ENCODE measurements at regions of chrX and their contacts with region 1.

Region 1: GRCh38 chrX:95764972-95765451 is 919.6 kb upstream of the DIAPH2 start:
- DNase-seq: no peak
- H3K4me3 ChIP-seq: no peak overlapping the region
- H3K27ac ChIP-seq: no peak overlapping the region
- H3K4me1 ChIP-seq: peaks cover 0 to 5% (median 3%) of the 10 kb centered on the region in 4 donors
- H3K27me3 ChIP-seq: no peaks in the 10 kb centered on the region
- CTCF ChIP-seq: peak; percentile 25 to 49 (median 48)
- EP300 ChIP-seq: no peak
- POLR2A ChIP-seq: no peak

Region 2: DNA sequence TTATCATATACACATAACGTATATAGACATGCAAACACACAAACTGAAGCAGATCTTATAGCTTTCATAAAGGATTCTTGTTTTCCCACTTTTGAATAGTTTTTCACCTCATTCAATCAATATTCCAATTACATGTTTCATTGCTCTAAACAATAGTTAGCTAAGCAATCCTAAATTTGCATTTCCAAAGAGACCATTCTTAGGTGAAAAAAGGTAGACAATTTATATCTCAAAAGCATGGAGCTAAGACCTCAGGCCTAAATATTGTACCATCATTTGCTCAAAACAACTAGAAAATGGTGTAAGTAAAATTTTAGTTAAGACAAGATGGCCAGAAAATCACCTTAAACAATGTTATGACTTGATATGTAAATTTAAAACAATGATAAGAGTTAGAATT is 228.9 kb before region 1 on chrX:
- intact Hi-C with region 1: no loop called
- DNase-seq: no peak
- H3K4me3 ChIP-seq: no peak overlapping the region
- H3K27ac ChIP-seq: no peak overlapping the region
- H3K4me1 ChIP-seq: no peaks in the 10 kb centered on the region
- H3K27me3 ChIP-seq: peaks cover 0 to 5% (median 0%) of the 10 kb centered on the region in 4 donors
- CTCF ChIP-seq: no peak
- EP300 ChIP-seq: no peak
- POLR2A ChIP-seq: no peak

Region 3: GRCh38 chrX:95716841-95717240 is 48.2 kb before region 1 on chrX:
- intact Hi-C with region 1: no loop called
- DNase-seq: no peak
- H3K4me3 ChIP-seq: no peak overlapping the region
- H3K27ac ChIP-seq: no peak overlapping the region
- H3K4me1 ChIP-seq: no peaks in the 10 kb centered on the region
- H3K27me3 ChIP-seq: no peaks in the 10 kb centered on the region
- CTCF ChIP-seq: no peak
- EP300 ChIP-seq: no peak
- POLR2A ChIP-seq: no peak

Region 4: GRCh38 chrX:96182366-96182765 is 417.4 kb after region 1 on chrX:
- intact Hi-C with region 1: loop called (anchors 10 kb)
- DNase-seq: no peak
- H3K4me3 ChIP-seq: no peak overlapping the region
- H3K27ac ChIP-seq: no peak overlapping the region
- H3K4me1 ChIP-seq: no peaks in the 10 kb centered on the region
- H3K27me3 ChIP-seq: no peaks in the 10 kb centered on the region
- CTCF ChIP-seq: peak; percentile 30 to 53 (median 36)
- EP300 ChIP-seq: no peak
- POLR2A ChIP-seq: no peak

Measured in esophagus muscularis mucosa (tissue), 4 donors.